ENCODE measurements at regions of chr4 and their contacts with region 1.

Region 1: GRCh38 chr4:145887241-145887991 is 51.2 kb downstream of the ZNF827 start:
- DNase-seq: peak in 2 of 5 donors; percentile 25 to 45
- ATAC-seq: peak; percentile 38 to 78 (median 56)
- H3K4me3 ChIP-seq: peak overlapping the region in 1 of 12 donors; percentile 2
- H3K27ac ChIP-seq: peak overlapping the region in 10 of 12 donors; percentile 34 to 77 (median 54)
- H3K4me1 ChIP-seq: peaks cover 3 to 38% (median 20%) of the 10 kb centered on the region in 12 donors
- H3K27me3 ChIP-seq: no peaks in the 10 kb centered on the region
- CTCF ChIP-seq: peak in 7 of 12 donors; percentile 10 to 46 (median 35)
- POLR2A ChIP-seq: no peak

Region 2: DNA sequence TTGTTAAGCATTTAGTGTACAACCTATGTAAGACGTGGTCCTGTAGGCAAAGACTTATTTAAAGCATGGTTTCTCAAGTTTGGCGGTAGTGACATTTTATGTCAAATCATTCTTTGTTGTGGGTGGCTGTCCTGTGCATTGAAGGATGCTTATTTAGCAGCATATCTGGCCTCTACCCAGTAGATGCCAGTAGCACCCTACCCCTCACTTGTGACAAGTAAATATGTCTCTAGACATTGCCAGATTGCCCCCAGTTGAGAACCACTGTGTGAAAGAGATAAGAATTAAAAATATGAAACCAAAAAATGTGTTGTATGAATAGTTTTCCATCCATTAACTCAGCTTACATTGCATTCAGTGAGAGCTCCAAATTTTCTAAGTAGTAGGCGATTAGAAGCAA is 242.7 kb before region 1 on chr4:
- intact Hi-C with region 1: loop called in 1 of 10 experiments (anchors 10 kb)
- DNase-seq: no peak
- ATAC-seq: no peak
- H3K4me3 ChIP-seq: no peak overlapping the region
- H3K27ac ChIP-seq: no peak overlapping the region
- H3K4me1 ChIP-seq: peaks cover 0 to 9% (median 4%) of the 10 kb centered on the region in 12 donors
- H3K27me3 ChIP-seq: no peaks in the 10 kb centered on the region
- CTCF ChIP-seq: peak in 3 of 12 donors; percentile 7 to 16 (median 14)
- POLR2A ChIP-seq: no peak

Region 3: DNA sequence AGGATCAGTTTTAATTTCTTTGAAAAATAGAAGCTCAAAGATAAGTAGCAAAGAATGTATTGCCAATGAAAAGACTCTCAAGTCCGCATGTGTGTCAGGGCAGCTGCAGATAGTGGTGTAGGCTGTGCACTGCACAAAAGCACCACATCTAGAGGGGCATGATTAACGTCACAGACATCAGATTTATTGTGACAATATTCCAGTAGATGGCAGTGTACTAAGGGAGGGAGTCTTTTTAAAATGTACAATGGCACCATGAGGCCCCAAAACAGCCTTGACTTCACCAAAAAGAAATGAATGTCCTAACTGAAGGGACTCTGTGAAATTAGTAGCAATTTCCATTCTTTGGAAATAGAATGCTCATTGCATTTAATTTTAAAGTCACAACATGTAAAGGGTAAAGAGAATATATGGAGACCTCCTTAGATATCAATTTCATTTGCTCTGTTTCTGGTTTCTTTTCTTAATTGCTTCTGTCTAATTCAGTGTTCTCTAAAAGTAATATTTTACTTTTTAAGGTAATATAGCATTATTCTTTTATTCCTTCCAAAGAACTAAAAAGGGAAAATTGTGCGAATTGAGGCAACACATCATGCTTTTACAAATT is 47.2 kb before region 1 on chr4:
- intact Hi-C with region 1: loop called in 1 of 10 experiments (anchors 5 kb)
- DNase-seq: no peak
- ATAC-seq: peak; percentile 58 to 86 (median 80)
- H3K4me3 ChIP-seq: no peak overlapping the region
- H3K27ac ChIP-seq: no peak overlapping the region
- H3K4me1 ChIP-seq: peaks cover 0 to 23% (median 0%) of the 10 kb centered on the region in 12 donors
- H3K27me3 ChIP-seq: no peaks in the 10 kb centered on the region
- CTCF ChIP-seq: peak in 11 of 12 donors; percentile 29 to 69 (median 55)
- POLR2A ChIP-seq: no peak

Region 4: GRCh38 chr4:145851511-145852201 is 35.8 kb before region 1 on chr4:
- intact Hi-C with region 1: loop called in 1 of 10 experiments (anchors 5 kb)
- DNase-seq: no peak
- ATAC-seq: peak in 1 of 4 donors; percentile 54
- H3K4me3 ChIP-seq: no peak overlapping the region
- H3K27ac ChIP-seq: peak overlapping the region in 2 of 12 donors; percentile 15 to 21
- H3K4me1 ChIP-seq: peaks cover 0 to 21% (median 15%) of the 10 kb centered on the region in 12 donors
- H3K27me3 ChIP-seq: no peaks in the 10 kb centered on the region
- CTCF ChIP-seq: no peak
- POLR2A ChIP-seq: no peak

Region 5: GRCh38 chr4:146029939-146030710 is 142.7 kb after region 1 on chr4:
- intact Hi-C with region 1: no loop called
- DNase-seq: no peak
- ATAC-seq: no peak
- H3K4me3 ChIP-seq: no peak overlapping the region
- H3K27ac ChIP-seq: no peak overlapping the region
- H3K4me1 ChIP-seq: no peaks in the 10 kb centered on the region
- H3K27me3 ChIP-seq: no peaks in the 10 kb centered on the region
- CTCF ChIP-seq: no peak
- POLR2A ChIP-seq: no peak

Region 6: GRCh38 chr4:146159384-146160058 is 272.1 kb after region 1 on chr4:
- intact Hi-C with region 1: no loop called
- DNase-seq: no peak
- ATAC-seq: no peak
- H3K4me3 ChIP-seq: no peak overlapping the region
- H3K27ac ChIP-seq: no peak overlapping the region
- H3K4me1 ChIP-seq: no peaks in the 10 kb centered on the region
- H3K27me3 ChIP-seq: peaks cover 0 to 6% (median 0%) of the 10 kb centered on the region in 9 donors
- CTCF ChIP-seq: no peak
- POLR2A ChIP-seq: no peak

Region 7: DNA sequence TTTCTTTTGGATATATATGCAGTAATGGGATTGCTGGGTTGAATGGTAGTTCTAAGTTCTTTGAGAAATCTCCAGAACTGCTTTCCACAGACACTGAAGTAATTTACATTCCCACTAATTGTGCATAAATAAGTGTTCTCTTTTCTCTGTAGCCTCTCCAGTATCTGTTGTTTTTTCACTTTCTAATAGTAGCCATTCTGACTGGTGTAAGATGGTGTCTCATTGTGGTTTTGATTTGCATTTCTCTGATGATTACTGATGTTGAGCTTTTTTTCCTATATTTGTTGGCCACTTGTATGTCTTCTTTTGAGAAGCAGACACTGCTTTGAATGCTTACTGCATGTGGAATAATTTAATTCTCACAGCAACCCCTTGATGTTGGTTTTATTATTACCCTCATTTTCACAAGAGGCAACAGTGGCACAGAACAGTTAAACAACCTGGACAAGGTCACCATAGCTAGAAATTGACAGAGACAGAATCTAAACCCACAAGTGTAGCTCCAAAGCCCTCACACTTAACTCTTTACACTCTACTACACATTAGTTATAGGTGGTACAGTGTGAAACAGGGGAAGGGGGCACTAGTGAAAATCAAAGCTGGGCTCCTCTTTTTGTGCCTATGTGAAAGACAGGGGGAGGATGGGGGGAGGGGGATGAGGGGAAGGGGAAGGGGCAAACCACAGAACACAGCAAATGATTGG is 423.1 kb after region 1 on chr4:
- intact Hi-C with region 1: no loop called
- DNase-seq: no peak
- ATAC-seq: no peak
- H3K4me3 ChIP-seq: no peak overlapping the region
- H3K27ac ChIP-seq: no peak overlapping the region
- H3K4me1 ChIP-seq: peaks cover 0 to 3% (median 0%) of the 10 kb centered on the region in 12 donors
- H3K27me3 ChIP-seq: no peaks in the 10 kb centered on the region
- CTCF ChIP-seq: no peak
- POLR2A ChIP-seq: no peak

Region 8: GRCh38 chr4:146450524-146450923 is 563.1 kb after region 1 on chr4:
- intact Hi-C with region 1: no loop called
- DNase-seq: no peak
- ATAC-seq: no peak
- H3K4me3 ChIP-seq: peak overlapping the region in 2 of 12 donors; percentile 2 to 9
- H3K27ac ChIP-seq: peak overlapping the region in 1 of 12 donors; percentile 1
- H3K4me1 ChIP-seq: peaks cover 0 to 15% (median 0%) of the 10 kb centered on the region in 12 donors
- H3K27me3 ChIP-seq: no peaks in the 10 kb centered on the region
- CTCF ChIP-seq: no peak
- POLR2A ChIP-seq: no peak

Measured in heart left ventricle (tissue), 16 donors.